Activated CD4-positive, alpha-beta memory T cell treated with anti-CD3 and anti-CD28 coated beads for 36 hours (primary cell): ENCODE measurements at regions of chr3 and their contacts with region 1.

Region 1: GRCh38 chr3:106333911-106334618 is 465.3 kb upstream of the CBLB start:
- DNase-seq: peak; percentile 81
- H3K4me3 Mint-ChIP-seq: peak overlapping the region; percentile 49
- H3K27ac Mint-ChIP-seq: peak overlapping the region; percentile 87
- H3K4me1 Mint-ChIP-seq: peaks cover 80% of the 10 kb centered on the region
- H3K27me3 Mint-ChIP-seq: no peaks in the 10 kb centered on the region

Region 2: DNA sequence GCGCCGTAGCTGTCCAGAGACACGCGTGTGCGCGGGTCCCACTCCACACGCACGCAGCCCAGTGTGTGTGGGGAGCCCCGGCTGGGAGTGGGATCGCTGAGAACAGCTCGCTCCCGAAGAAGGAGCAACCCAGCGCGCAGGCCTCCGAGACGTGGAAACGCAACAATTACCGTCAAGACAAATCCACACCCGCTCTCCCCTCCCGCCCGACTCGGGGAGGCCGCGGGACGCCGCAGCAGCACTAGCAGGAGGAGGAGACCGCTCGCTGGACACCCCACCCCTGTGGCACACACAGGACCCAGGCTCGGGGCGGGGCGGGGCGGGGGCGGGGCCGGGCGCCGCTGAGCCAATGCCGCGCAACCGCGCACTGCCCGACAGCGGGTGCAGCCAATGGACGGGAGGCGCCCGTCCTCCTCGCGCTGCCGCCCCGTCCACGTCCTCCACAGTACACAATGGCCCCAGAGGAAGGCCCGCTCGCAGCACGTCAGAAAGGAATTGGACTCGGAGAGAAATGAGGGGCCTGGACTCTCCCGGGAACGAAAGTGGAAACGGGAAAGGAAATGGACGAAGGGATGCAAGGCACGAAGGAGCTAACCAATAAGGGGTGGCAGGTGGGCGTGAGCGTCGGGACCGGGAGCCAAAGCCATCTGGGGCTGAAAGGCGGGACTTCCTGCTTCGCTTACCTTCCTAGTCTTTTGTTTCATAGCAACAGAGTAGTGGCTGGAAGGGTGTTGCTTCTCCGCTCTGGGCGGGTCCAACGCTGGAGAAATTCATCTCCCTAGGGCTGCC is 465.1 kb before region 1 on chr3 and contains the start of gene CBLB:
- CTCF ChIA-PET with region 1: interaction called, 4 read pairs
- POLR2A ChIA-PET with region 1: interaction called, 6 read pairs
- intact Hi-C with region 1: loop called (anchors 1 kb)
- DNase-seq: peak; percentile 91
- H3K4me3 Mint-ChIP-seq: peak within 1 kb of the TSS; percentile 94
- H3K27ac Mint-ChIP-seq: peak within 1 kb of the TSS; percentile 94
- H3K4me1 Mint-ChIP-seq: peaks cover 38% of the 10 kb centered on the region
- H3K27me3 Mint-ChIP-seq: no peaks in the 10 kb centered on the region
- total RNA-seq, gene CBLB: 86.1 to 88.2 TPM

Region 3: GRCh38 chr3:106176734-106177133 is 157.3 kb before region 1 on chr3:
- CTCF ChIA-PET with region 1: no interaction called
- POLR2A ChIA-PET with region 1: no interaction called
- intact Hi-C with region 1: loop called (anchors 1 kb)
- DNase-seq: peak; percentile 76
- H3K4me3 Mint-ChIP-seq: peak overlapping the region; percentile 51
- H3K27ac Mint-ChIP-seq: peak overlapping the region; percentile 87
- H3K4me1 Mint-ChIP-seq: peaks cover 58% of the 10 kb centered on the region
- H3K27me3 Mint-ChIP-seq: no peaks in the 10 kb centered on the region

Region 4: DNA sequence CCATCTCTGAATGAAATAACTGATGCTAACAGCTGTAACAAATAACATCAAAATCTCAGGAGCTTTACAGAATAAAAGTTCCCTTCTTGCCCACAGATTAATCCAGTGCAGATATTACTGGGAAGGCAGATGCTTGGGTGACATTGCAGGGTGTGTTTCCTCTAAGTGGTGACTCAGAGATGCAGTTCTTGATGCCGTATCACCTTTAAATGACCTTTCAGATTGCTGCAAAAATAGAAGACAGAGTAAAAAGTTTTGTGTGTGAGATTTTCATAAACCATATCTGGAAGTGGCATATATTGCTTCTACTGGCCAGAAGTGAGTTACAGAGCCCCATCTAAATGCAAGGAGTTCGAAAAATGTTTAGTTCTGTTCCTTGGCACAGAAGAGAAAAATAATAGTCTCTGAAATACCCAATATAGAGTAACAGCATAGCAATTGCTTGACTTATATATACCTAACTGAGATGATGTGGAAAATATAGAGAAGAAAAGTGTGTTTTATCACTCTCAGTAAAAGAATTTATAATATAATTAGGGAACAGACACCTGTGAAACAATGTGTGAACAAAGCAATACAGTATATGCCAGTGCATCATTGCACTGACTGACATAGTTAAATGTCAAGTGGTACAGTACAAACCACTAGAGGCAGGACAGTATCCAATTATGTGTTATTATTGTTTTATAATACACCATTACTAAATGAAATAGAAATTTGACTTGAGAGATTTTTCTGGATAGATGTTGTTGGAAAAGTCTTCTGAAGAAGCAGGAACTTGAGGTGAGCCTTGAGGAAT is 34.6 kb before region 1 on chr3:
- CTCF ChIA-PET with region 1: interaction called, 4 read pairs
- POLR2A ChIA-PET with region 1: no interaction called
- intact Hi-C with region 1: loop called (anchors 1 kb)
- DNase-seq: peak; percentile 30
- H3K4me3 Mint-ChIP-seq: no peak overlapping the region
- H3K27ac Mint-ChIP-seq: peak overlapping the region; percentile 53
- H3K4me1 Mint-ChIP-seq: peaks cover 50% of the 10 kb centered on the region
- H3K27me3 Mint-ChIP-seq: no peaks in the 10 kb centered on the region

Region 5: GRCh38 chr3:106371971-106372805 is 38.1 kb after region 1 on chr3:
- CTCF ChIA-PET with region 1: no interaction called
- POLR2A ChIA-PET with region 1: no interaction called
- intact Hi-C with region 1: no loop called
- DNase-seq: no peak
- H3K4me3 Mint-ChIP-seq: no peak overlapping the region
- H3K27ac Mint-ChIP-seq: no peak overlapping the region
- H3K4me1 Mint-ChIP-seq: no peaks in the 10 kb centered on the region
- H3K27me3 Mint-ChIP-seq: no peaks in the 10 kb centered on the region

Region 6: GRCh38 chr3:106473576-106474475 is 139.8 kb after region 1 on chr3:
- CTCF ChIA-PET with region 1: interaction called, 4 read pairs
- POLR2A ChIA-PET with region 1: interaction called, 6 read pairs
- intact Hi-C with region 1: loop called (anchors 1 kb)
- DNase-seq: peak; percentile 53
- H3K4me3 Mint-ChIP-seq: no peak overlapping the region
- H3K27ac Mint-ChIP-seq: peak overlapping the region; percentile 71
- H3K4me1 Mint-ChIP-seq: peaks cover 19% of the 10 kb centered on the region
- H3K27me3 Mint-ChIP-seq: no peaks in the 10 kb centered on the region